CD8-positive, alpha-beta T cell (primary cell): ENCODE measurements at regions of chr22 and their contacts with region 1.

Region 1: DNA sequence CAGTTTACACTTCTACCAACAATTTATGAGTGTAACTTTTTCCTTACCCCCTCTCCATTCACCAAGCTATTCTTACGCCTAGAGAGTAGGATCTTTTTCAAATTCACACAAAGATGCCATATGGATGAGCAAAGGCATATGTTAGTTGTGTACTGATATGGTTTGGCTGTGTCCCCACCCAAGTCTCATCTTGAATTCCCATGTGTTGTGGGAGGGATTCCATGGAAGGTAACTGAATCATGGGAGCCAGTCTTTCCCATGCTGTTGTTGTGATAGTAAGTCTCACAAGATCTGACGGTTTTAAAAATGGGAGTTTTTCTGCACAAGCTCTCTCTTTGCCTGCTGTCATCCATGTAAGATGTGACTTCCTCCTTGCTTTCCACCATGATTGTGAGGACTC is 40.3 kb downstream of the TTC28 start:
- DNase-seq: no peak
- ATAC-seq: no peak
- H3K4me3 ChIP-seq: no peak overlapping the region
- H3K4me3 Mint-ChIP-seq: no peak overlapping the region
- H3K27ac ChIP-seq: no peak overlapping the region
- H3K27ac Mint-ChIP-seq: no peak overlapping the region
- H3K4me1 ChIP-seq: no peaks in the 10 kb centered on the region
- H3K4me1 Mint-ChIP-seq: no peaks in the 10 kb centered on the region
- H3K27me3 ChIP-seq: peaks cover 8 to 19% of the 10 kb centered on the region in 2 experiments
- H3K27me3 Mint-ChIP-seq: peaks cover 54% of the 10 kb centered on the region
- CTCF ChIP-seq: no peak

Region 2: DNA sequence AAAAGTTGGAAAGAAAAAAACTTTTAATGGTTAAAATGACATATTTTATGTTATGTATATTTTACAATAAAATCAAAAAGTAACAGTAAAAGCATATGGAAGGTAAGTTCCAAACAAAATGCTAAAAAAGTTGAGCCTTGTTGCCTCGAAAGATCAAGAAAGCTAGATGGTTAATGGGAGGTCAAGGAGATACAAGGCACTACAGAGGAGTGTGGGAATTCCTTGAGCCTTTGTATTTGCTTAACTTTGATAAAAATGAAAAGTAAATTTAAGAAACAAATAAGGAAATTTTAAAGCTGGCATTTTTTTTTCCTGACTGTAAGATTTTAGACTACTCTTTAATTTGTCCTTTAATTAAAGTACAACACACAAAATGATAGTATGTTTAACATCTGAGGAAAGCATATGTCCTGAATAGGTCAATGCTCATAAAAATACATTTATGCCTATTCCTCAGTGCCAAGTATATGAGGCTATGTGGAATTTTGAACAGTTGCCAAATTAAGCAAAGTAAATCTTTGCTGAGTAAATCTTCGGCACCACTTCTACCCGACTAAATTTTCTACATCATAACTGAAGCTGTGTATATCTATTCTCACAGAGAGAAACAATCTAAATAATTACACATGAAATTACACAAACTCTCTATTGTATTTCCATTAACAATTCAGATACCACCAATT is 68.5 kb before region 1 on chr22:
- CTCF ChIA-PET with region 1: no interaction called
- POLR2A ChIA-PET with region 1: no interaction called
- intact Hi-C with region 1: no loop called
- DNase-seq: no peak
- ATAC-seq: no peak
- H3K4me3 ChIP-seq: no peak overlapping the region
- H3K4me3 Mint-ChIP-seq: no peak overlapping the region
- H3K27ac ChIP-seq: no peak overlapping the region
- H3K27ac Mint-ChIP-seq: no peak overlapping the region
- H3K4me1 ChIP-seq: no peaks in the 10 kb centered on the region
- H3K4me1 Mint-ChIP-seq: no peaks in the 10 kb centered on the region
- H3K27me3 ChIP-seq: peaks cover 0 to 2% of the 10 kb centered on the region in 2 experiments
- H3K27me3 Mint-ChIP-seq: peaks cover 5% of the 10 kb centered on the region
- CTCF ChIP-seq: no peak

Region 3: GRCh38 chr22:28656181-28656580 is 16.9 kb after region 1 on chr22:
- CTCF ChIA-PET with region 1: no interaction called
- POLR2A ChIA-PET with region 1: no interaction called
- intact Hi-C with region 1: loop called in 1 of 2 experiments (anchors 1 kb)
- DNase-seq: no peak
- ATAC-seq: no peak
- H3K4me3 ChIP-seq: no peak overlapping the region
- H3K4me3 Mint-ChIP-seq: no peak overlapping the region
- H3K27ac ChIP-seq: no peak overlapping the region
- H3K27ac Mint-ChIP-seq: no peak overlapping the region
- H3K4me1 ChIP-seq: no peaks in the 10 kb centered on the region
- H3K4me1 Mint-ChIP-seq: no peaks in the 10 kb centered on the region
- H3K27me3 ChIP-seq: peaks cover 5 to 13% of the 10 kb centered on the region in 2 experiments
- H3K27me3 Mint-ChIP-seq: peaks cover 56% of the 10 kb centered on the region
- CTCF ChIP-seq: no peak

Region 4: DNA sequence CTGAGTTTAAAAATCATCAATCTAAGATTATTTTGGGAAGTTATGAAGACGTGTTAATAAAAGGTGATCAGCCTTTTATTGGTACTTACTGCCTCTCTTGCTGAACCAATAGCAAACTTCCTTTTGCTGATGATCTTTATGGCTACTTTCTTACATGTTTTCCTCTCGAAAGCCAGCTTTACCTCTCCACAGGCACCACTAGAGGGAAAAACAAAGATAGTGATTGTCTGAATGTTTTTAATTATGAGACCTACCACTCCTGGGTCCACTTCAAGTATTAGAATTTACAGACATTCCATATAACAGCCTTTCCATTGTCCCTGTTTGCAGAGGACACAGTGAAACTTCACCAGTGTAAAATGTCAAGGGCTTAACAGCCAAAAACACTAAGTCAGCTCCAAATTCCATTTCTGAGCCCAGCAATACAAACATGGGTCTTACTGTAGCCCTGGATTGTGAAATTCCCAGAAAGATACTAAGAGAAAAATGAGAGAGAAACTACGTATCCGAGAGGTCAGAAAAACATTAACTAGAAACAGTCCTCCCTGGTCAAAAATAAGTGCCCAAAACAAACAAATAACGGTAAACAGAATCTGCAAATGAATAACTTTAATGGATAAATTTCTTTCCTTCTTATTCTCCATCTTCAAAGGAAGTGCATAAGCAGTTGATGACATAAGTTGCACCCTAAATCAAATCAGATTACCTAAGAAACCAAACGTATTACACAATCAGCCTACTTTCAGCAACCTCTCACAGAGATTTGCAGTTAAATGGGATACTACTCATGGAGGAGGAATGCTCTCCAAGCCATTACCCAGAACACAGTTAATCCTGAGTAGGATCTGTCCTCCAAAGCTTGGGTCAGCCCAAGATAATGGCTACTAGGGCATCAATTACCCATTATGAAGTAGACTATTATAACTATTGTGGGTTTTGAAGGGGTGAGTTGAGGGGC is 72.8 kb after region 1 on chr22:
- CTCF ChIA-PET with region 1: no interaction called
- POLR2A ChIA-PET with region 1: no interaction called
- intact Hi-C with region 1: no loop called
- DNase-seq: no peak
- ATAC-seq: no peak
- H3K4me3 ChIP-seq: no peak overlapping the region
- H3K4me3 Mint-ChIP-seq: no peak overlapping the region
- H3K27ac ChIP-seq: no peak overlapping the region
- H3K27ac Mint-ChIP-seq: no peak overlapping the region
- H3K4me1 ChIP-seq: no peaks in the 10 kb centered on the region
- H3K4me1 Mint-ChIP-seq: no peaks in the 10 kb centered on the region
- H3K27me3 ChIP-seq: no peaks in the 10 kb centered on the region
- H3K27me3 Mint-ChIP-seq: no peaks in the 10 kb centered on the region
- CTCF ChIP-seq: no peak